T-cell (primary cell): ENCODE measurements at regions of chr2 and their contacts with region 1.

Region 1: GRCh38 chr2:172465417-172466334 is 38.3 kb downstream of the ITGA6 start:
- DNase-seq: peak; percentile 42 to 86 (median 66)
- ATAC-seq: peak in 3 of 4 experiments; percentile 14 to 29 (median 18)
- H3K4me3 ChIP-seq: no peak overlapping the region
- H3K4me3 Mint-ChIP-seq: peak overlapping the region; percentile 18 to 82 (median 21)
- H3K27ac ChIP-seq: peak overlapping the region; percentile 66
- H3K27ac Mint-ChIP-seq: peak overlapping the region; percentile 96 to 99
- H3K4me1 ChIP-seq: peaks cover 45 to 47% of the 10 kb centered on the region in 2 experiments
- H3K4me1 Mint-ChIP-seq: peaks cover 68 to 79% (median 72%) of the 10 kb centered on the region in 3 donors
- H3K27me3 ChIP-seq: no peaks in the 10 kb centered on the region
- H3K27me3 Mint-ChIP-seq: no peaks in the 10 kb centered on the region

Region 2: GRCh38 chr2:172427256-172427989 is 38.3 kb before region 1 on chr2 and contains the start of gene ITGA6:
- CTCF ChIA-PET with region 1: interaction called, 100 to 126 read pairs
- POLR2A ChIA-PET with region 1: interaction called, 3 to 5 read pairs
- DNase-seq: peak; percentile 43 to 84 (median 62)
- ATAC-seq: peak; percentile 72 to 79 (median 76)
- H3K4me3 ChIP-seq: peak within 1 kb of the TSS; percentile 67 to 93
- H3K4me3 Mint-ChIP-seq: peak within 1 kb of the TSS in 2 of 3 donors; percentile 88 to 94
- H3K27ac ChIP-seq: peak within 1 kb of the TSS; percentile 45
- H3K27ac Mint-ChIP-seq: peak within 1 kb of the TSS; percentile 90 to 92
- H3K4me1 ChIP-seq: peaks cover 32 to 38% of the 10 kb centered on the region in 2 experiments
- H3K4me1 Mint-ChIP-seq: peaks cover 34 to 76% (median 34%) of the 10 kb centered on the region in 3 donors
- H3K27me3 ChIP-seq: no peaks in the 10 kb centered on the region
- H3K27me3 Mint-ChIP-seq: no peaks in the 10 kb centered on the region
- total RNA-seq, gene ITGA6: 50.7 to 188 (median 80.9) TPM

Region 3: GRCh38 chr2:172442072-172442895 is 23.4 kb before region 1 on chr2:
- CTCF ChIA-PET with region 1: interaction called, 69 to 118 read pairs
- POLR2A ChIA-PET with region 1: interaction called, 3 to 5 read pairs
- DNase-seq: peak in 3 of 35 experiments; percentile 37 to 64 (median 53)
- ATAC-seq: peak; percentile 48 to 84 (median 80)
- H3K4me3 ChIP-seq: peak overlapping the region; percentile 7 to 47
- H3K4me3 Mint-ChIP-seq: peak overlapping the region in 2 of 3 donors; percentile 78 to 82
- H3K27ac ChIP-seq: no peak overlapping the region
- H3K27ac Mint-ChIP-seq: peak overlapping the region; percentile 83 to 89
- H3K4me1 ChIP-seq: peaks cover 60 to 70% of the 10 kb centered on the region in 2 experiments
- H3K4me1 Mint-ChIP-seq: peaks cover 52 to 55% (median 54%) of the 10 kb centered on the region in 3 donors
- H3K27me3 ChIP-seq: no peaks in the 10 kb centered on the region
- H3K27me3 Mint-ChIP-seq: no peaks in the 10 kb centered on the region

Region 4: DNA sequence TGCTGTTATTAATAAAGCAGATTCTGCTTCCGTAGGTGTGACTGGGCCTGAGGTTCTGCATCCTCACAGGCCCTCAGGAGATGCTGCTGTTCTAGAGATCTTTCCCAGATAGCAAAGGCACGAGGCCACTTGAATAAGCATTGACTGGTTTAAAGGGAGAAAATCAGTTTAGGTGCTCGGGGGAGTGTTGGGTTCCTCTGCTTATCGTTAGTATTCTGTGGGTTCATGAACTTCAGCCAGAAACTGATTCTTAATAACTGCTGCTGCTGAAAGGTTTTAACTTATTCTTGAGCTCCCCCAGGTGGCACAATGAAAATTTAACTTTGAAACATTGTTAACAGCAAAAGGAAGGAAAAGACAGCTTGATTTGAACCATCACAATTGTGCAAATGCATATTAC is 18.6 kb after region 1 on chr2:
- CTCF ChIA-PET with region 1: interaction called, 9 to 10 read pairs
- POLR2A ChIA-PET with region 1: interaction called, 3 to 4 read pairs
- DNase-seq: peak in 3 of 35 experiments; percentile 33 to 61 (median 39)
- ATAC-seq: peak; percentile 59 to 70 (median 64)
- H3K4me3 ChIP-seq: no peak overlapping the region
- H3K4me3 Mint-ChIP-seq: peak overlapping the region in 1 of 3 donors; percentile 58
- H3K27ac ChIP-seq: no peak overlapping the region
- H3K27ac Mint-ChIP-seq: peak overlapping the region; percentile 82 to 85
- H3K4me1 ChIP-seq: peaks cover 26 to 41% of the 10 kb centered on the region in 2 experiments
- H3K4me1 Mint-ChIP-seq: peaks cover 61 to 72% (median 64%) of the 10 kb centered on the region in 3 donors
- H3K27me3 ChIP-seq: no peaks in the 10 kb centered on the region
- H3K27me3 Mint-ChIP-seq: no peaks in the 10 kb centered on the region

Region 5: DNA sequence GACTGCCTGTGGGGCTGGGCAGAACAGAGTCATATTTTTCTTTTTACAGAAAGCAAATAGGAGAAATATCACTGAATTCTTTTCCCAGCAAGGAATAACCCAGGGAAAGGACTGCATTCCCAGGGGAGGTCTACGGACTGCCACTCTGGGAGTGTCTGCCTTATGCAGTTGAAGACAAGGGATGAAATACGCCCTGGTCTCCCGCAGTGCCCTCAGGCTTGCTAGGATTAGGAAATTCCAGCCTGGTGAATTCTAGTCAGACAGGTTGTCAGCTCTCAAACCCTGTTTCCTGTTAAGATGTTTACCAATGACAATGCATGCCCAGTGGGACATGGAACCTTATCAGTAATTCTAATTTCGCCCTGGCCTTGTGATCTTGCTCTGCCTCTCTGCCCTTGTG is 59.9 kb after region 1 on chr2:
- CTCF ChIA-PET with region 1: no interaction called
- POLR2A ChIA-PET with region 1: no interaction called
- DNase-seq: no peak
- ATAC-seq: no peak
- H3K4me3 ChIP-seq: no peak overlapping the region
- H3K4me3 Mint-ChIP-seq: no peak overlapping the region
- H3K27ac ChIP-seq: no peak overlapping the region
- H3K27ac Mint-ChIP-seq: no peak overlapping the region
- H3K4me1 ChIP-seq: no peaks in the 10 kb centered on the region
- H3K4me1 Mint-ChIP-seq: no peaks in the 10 kb centered on the region
- H3K27me3 ChIP-seq: no peaks in the 10 kb centered on the region
- H3K27me3 Mint-ChIP-seq: no peaks in the 10 kb centered on the region

Region 6: GRCh38 chr2:172836386-172836821 is 370.7 kb after region 1 on chr2:
- CTCF ChIA-PET with region 1: no interaction called
- POLR2A ChIA-PET with region 1: no interaction called
- DNase-seq: no peak
- ATAC-seq: no peak
- H3K4me3 ChIP-seq: no peak overlapping the region
- H3K4me3 Mint-ChIP-seq: no peak overlapping the region
- H3K27ac ChIP-seq: no peak overlapping the region
- H3K27ac Mint-ChIP-seq: no peak overlapping the region
- H3K4me1 ChIP-seq: peaks cover 0 to 3% of the 10 kb centered on the region in 2 experiments
- H3K4me1 Mint-ChIP-seq: peaks cover 0 to 4% (median 4%) of the 10 kb centered on the region in 3 donors
- H3K27me3 ChIP-seq: peaks cover 0 to 4% of the 10 kb centered on the region in 2 experiments
- H3K27me3 Mint-ChIP-seq: peaks cover 3 to 18% of the 10 kb centered on the region in 2 donors